Activated CD4-positive, alpha-beta memory T cell treated with anti-CD3 and anti-CD28 coated beads for 36 hours (primary cell): ENCODE measurements at regions of chr6 and their contacts with region 1.

Region 1: DNA sequence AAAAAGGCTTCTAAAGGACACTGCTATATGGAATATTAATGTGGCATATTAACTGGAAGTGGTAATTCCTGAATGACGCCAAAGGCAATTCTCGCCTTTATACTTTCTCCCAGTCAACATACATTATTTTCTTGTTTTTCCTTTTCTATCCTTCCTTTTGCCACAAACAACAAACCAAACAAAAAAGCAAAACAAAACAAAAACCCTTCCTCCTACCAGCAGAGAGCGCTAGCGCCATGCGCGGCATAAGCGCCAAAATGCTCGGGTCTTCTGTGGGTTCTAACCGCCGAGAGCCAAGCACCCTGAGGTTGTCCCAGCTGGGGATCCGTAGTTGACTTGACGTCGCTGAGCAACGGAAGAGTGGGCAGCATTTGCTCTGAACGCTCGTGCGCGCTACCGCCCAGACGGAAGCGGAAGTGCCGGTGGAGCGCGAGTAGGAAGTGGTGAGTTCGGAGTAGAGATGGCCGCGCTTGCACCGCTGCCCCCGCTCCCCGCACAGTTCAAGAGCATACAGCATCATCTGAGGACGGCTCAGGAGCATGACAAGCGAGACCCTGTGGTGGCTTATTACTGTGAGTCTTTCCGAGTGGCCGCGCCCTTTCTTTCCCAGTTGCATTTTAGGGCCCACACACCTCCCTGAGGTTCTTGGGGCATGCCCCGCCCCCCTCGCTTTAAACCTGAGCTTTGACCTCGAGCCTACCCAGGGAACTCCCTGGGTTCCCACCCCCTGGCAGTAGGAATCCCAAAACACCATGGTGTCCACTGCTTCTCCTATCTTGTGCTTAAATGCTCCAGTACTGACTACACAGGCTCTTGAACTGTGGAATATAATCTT is at the starts of genes NMBR and VTA1:
- DNase-seq: peak; percentile 98
- H3K4me3 Mint-ChIP-seq: peak within 1 kb of the TSS; percentile 96
- H3K27ac Mint-ChIP-seq: peak within 1 kb of the TSS; percentile 70
- H3K4me1 Mint-ChIP-seq: peaks cover 51% of the 10 kb centered on the region
- H3K27me3 Mint-ChIP-seq: no peaks in the 10 kb centered on the region
- total RNA-seq, gene NMBR: not detected
- total RNA-seq, gene VTA1: 43.5 to 47.4 TPM

Region 2: DNA sequence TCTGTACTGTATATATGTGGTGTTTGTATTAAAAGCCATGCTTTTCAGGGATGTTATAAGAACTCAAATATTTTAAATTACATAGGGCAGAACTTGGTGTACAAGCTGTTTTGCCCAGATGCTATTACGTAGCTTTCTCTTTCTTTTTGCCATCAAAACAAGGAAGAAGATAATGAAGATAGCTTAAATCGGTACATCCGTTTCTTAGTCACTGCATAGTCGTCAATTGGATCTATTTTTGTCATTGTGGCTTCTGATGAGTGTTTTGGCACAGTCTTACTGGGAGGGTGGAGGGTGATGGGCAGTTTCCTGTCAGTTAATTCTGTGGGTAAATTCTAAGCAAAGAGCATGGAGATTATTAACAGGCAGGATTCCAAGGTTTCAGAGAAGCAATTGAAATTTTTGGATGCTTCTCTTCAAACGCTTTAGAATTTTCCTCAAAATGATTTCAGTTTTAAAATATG is 663.4 kb before region 1 on chr6:
- CTCF ChIA-PET with region 1: no interaction called
- POLR2A ChIA-PET with region 1: no interaction called
- intact Hi-C with region 1: loop called (anchors 1 kb)
- DNase-seq: peak; percentile 65
- H3K4me3 Mint-ChIP-seq: peak overlapping the region; percentile 73
- H3K27ac Mint-ChIP-seq: peak overlapping the region; percentile 93
- H3K4me1 Mint-ChIP-seq: peaks cover 41% of the 10 kb centered on the region
- H3K27me3 Mint-ChIP-seq: no peaks in the 10 kb centered on the region

Region 3: GRCh38 chr6:141598487-141598886 is 548.6 kb before region 1 on chr6:
- CTCF ChIA-PET with region 1: no interaction called
- POLR2A ChIA-PET with region 1: no interaction called
- intact Hi-C with region 1: no loop called
- DNase-seq: no peak
- H3K4me3 Mint-ChIP-seq: no peak overlapping the region
- H3K27ac Mint-ChIP-seq: no peak overlapping the region
- H3K4me1 Mint-ChIP-seq: no peaks in the 10 kb centered on the region
- H3K27me3 Mint-ChIP-seq: no peaks in the 10 kb centered on the region

Region 4: GRCh38 chr6:142132625-142133024 is 14.4 kb before region 1 on chr6 and contains the start of gene GJE1:
- CTCF ChIA-PET with region 1: no interaction called
- POLR2A ChIA-PET with region 1: no interaction called
- intact Hi-C with region 1: no loop called
- DNase-seq: no peak
- H3K4me3 Mint-ChIP-seq: no peak within 1 kb of the TSS
- H3K27ac Mint-ChIP-seq: no peak within 1 kb of the TSS
- H3K4me1 Mint-ChIP-seq: no peaks in the 10 kb centered on the region
- H3K27me3 Mint-ChIP-seq: peaks cover 19% of the 10 kb centered on the region
- total RNA-seq, gene GJE1: not detected

Region 5: DNA sequence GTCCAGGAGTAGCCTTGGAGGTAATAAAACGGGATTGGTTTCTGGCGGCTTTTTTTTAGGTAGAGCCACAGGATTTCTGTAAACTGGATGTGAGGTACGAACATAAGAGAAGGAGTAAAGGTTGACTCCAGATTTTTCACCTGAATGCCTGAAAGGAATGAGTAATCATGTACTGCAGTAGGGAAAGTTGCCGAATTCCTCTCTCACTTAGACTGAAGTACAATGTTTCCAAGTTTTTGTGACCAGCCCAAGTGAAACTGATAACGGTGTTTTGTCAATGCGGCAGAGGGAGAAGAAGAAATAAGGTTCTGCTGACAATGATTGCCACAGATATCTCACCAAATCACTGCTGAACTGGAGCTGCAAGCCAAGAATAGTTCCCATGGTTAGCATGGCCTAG is 75.0 kb after region 1 on chr6:
- CTCF ChIA-PET with region 1: no interaction called
- POLR2A ChIA-PET with region 1: no interaction called
- intact Hi-C with region 1: no loop called
- DNase-seq: no peak
- H3K4me3 Mint-ChIP-seq: no peak overlapping the region
- H3K27ac Mint-ChIP-seq: no peak overlapping the region
- H3K4me1 Mint-ChIP-seq: no peaks in the 10 kb centered on the region
- H3K27me3 Mint-ChIP-seq: no peaks in the 10 kb centered on the region

Region 6: DNA sequence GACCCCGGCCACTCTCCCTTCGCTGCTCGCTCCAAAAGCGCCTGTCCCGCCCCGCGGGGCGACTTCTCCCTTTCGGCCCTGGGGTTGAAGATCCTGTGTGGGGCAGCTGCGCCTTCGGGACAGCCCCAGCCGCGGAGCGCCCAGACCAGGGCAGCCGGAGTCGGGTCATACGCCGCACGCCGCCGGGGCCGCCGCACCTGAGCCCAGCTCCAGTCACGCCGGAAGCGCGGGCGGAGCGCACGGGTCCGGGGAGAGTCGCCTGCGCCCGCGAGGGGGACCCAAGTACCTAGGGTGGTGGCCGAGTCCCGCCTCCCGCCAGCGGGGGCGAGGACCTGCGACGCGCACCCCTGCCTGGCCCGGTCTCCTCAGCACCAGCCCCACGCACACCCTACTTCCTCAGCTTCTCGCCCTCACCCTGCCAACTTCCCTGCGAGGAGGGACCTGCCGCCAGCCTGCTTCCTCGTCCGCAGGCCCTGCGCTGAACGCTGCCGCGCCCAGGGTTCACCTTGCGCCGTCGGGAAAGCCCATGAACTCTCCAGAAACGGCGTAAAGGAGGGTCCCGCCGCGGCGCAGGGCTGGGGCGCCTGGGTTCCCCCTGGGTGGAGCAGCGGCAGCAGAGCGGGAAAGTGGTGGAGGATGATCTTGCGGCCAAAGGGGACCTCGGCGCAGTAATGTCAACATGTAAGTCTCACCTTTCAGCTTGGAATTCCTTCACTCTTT is 154.8 kb after region 1 on chr6 and contains the start of gene ADGRG6:
- CTCF ChIA-PET with region 1: interaction called, 4 read pairs
- POLR2A ChIA-PET with region 1: no interaction called
- intact Hi-C with region 1: loop called (anchors 5 kb)
- DNase-seq: peak; percentile 58
- H3K4me3 Mint-ChIP-seq: peak within 1 kb of the TSS; percentile 76
- H3K27ac Mint-ChIP-seq: no peak within 1 kb of the TSS
- H3K4me1 Mint-ChIP-seq: peaks cover 2% of the 10 kb centered on the region
- H3K27me3 Mint-ChIP-seq: peaks cover 26% of the 10 kb centered on the region
- total RNA-seq, gene ADGRG6: 0.12 to 0.55 TPM

Region 7: GRCh38 chr6:142395768-142396231 is 248.8 kb after region 1 on chr6:
- CTCF ChIA-PET with region 1: no interaction called
- POLR2A ChIA-PET with region 1: no interaction called
- intact Hi-C with region 1: loop called (anchors 1 kb)
- DNase-seq: no peak
- H3K4me3 Mint-ChIP-seq: peak overlapping the region; percentile 10
- H3K27ac Mint-ChIP-seq: no peak overlapping the region
- H3K4me1 Mint-ChIP-seq: peaks cover 17% of the 10 kb centered on the region
- H3K27me3 Mint-ChIP-seq: peaks cover 18% of the 10 kb centered on the region

Region 8: DNA sequence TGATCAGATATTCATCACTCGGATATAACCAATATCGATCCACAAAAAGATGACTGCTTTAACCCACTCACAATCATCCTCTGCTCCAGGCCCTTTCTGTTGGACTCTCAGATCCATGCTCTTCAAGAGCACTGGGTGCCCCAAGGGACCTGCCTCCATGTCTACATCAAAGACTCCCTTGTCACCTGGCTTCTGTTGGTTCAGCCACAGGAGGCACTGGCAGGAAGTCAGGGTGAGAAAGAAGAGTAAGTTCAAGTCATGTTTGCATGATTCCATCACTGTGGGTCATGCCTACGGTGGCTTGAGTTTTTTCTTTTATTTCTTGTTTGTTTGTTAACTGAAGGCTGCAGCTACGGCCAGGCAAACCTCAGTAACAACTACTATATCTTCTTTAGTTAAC is 398.1 kb after region 1 on chr6:
- CTCF ChIA-PET with region 1: no interaction called
- POLR2A ChIA-PET with region 1: no interaction called
- intact Hi-C with region 1: loop called (anchors 2 kb)
- DNase-seq: peak; percentile 15
- H3K4me3 Mint-ChIP-seq: no peak overlapping the region
- H3K27ac Mint-ChIP-seq: no peak overlapping the region
- H3K4me1 Mint-ChIP-seq: peaks cover 23% of the 10 kb centered on the region
- H3K27me3 Mint-ChIP-seq: peaks cover 2% of the 10 kb centered on the region